ENCODE measurements at regions of chrX and their contacts with region 1.

Region 1: GRCh38 chrX:101595739-101596419 is 21.9 kb downstream of the ARMCX6 start:
- DNase-seq: peak in 5 of 9 experiments; percentile 13 to 76 (median 42)
- ATAC-seq: peak; percentile 72
- H3K4me3 ChIP-seq: no peak overlapping the region
- H3K4me3 Mint-ChIP-seq: no peak overlapping the region
- H3K27ac ChIP-seq: no peak overlapping the region
- H3K27ac Mint-ChIP-seq: no peak overlapping the region
- H3K4me1 ChIP-seq: no peaks in the 10 kb centered on the region
- H3K4me1 Mint-ChIP-seq: no peaks in the 10 kb centered on the region
- H3K27me3 ChIP-seq: no peaks in the 10 kb centered on the region
- H3K27me3 Mint-ChIP-seq: peaks cover 14% of the 10 kb centered on the region
- CTCF ChIP-seq: peak; percentile 65

Region 2: DNA sequence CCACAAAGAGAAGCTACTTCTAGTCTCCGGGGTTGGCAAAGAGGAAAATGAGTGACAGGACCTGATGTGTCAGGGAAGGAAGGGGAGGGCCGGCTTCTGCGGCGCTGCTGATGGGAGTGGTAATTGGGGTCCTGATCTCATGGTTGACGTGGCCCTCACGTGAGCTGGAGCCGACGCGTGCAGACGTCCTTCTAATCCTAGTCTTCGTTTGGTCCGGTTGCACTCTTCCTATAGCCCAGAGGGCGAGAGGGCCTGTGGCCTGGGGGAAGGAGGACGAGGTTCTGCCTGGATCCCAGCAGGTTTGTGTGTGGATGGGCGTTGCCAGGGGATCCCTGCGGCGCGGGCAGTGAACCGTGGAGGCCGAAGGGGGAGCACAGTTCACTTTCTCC is 45.5 kb before region 1 on chrX and contains the start of gene ARMCX1:
- CTCF ChIA-PET with region 1: no interaction called
- POLR2A ChIA-PET with region 1: no interaction called
- intact Hi-C with region 1: no loop called
- DNase-seq: peak in 5 of 9 experiments; percentile 13 to 49 (median 30)
- ATAC-seq: peak; percentile 69
- H3K4me3 ChIP-seq: peak within 1 kb of the TSS; percentile 34 to 61
- H3K4me3 Mint-ChIP-seq: peak within 1 kb of the TSS; percentile 84
- H3K27ac ChIP-seq: peak within 1 kb of the TSS in 1 of 2 experiments; percentile 40
- H3K27ac Mint-ChIP-seq: peak within 1 kb of the TSS; percentile 60
- H3K4me1 ChIP-seq: no peaks in the 10 kb centered on the region
- H3K4me1 Mint-ChIP-seq: peaks cover 8% of the 10 kb centered on the region
- H3K27me3 ChIP-seq: no peaks in the 10 kb centered on the region
- H3K27me3 Mint-ChIP-seq: peaks cover 3% of the 10 kb centered on the region
- CTCF ChIP-seq: no peak
- total RNA-seq, gene ARMCX1: 1.4 to 2.2 TPM

Region 3: GRCh38 chrX:101759000-101759399 is 163.1 kb after region 1 on chrX:
- CTCF ChIA-PET with region 1: interaction called, 15 read pairs
- POLR2A ChIA-PET with region 1: no interaction called
- intact Hi-C with region 1: loop called (anchors 5 kb)
- DNase-seq: peak in 5 of 9 experiments; percentile 10 to 59 (median 18)
- ATAC-seq: peak; percentile 57
- H3K4me3 ChIP-seq: no peak overlapping the region
- H3K4me3 Mint-ChIP-seq: no peak overlapping the region
- H3K27ac ChIP-seq: no peak overlapping the region
- H3K27ac Mint-ChIP-seq: no peak overlapping the region
- H3K4me1 ChIP-seq: no peaks in the 10 kb centered on the region
- H3K4me1 Mint-ChIP-seq: peaks cover 2% of the 10 kb centered on the region
- H3K27me3 ChIP-seq: no peaks in the 10 kb centered on the region
- H3K27me3 Mint-ChIP-seq: peaks cover 2% of the 10 kb centered on the region
- CTCF ChIP-seq: peak; percentile 46

Region 4: DNA sequence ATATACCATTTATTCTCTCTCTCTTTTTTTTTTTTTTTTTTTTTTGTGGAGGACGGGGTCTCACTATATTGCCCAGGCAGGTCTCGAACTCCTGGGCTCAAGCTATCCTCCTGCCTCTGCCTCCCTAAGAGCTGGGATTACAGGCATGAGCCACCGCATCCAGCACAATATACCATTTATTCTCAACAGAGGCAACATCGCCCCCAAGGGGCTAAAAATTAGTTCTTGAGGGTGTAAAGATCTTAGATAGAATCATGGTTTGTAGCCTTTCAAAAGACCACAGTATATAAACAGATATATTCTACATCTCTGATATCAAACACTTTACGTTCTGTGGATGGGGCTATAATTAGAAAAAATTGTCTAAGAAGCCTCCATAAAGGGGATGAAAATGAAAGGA is 489.8 kb after region 1 on chrX:
- CTCF ChIA-PET with region 1: no interaction called
- POLR2A ChIA-PET with region 1: no interaction called
- intact Hi-C with region 1: loop called in 1 of 2 experiments (anchors 5 kb)
- DNase-seq: peak in 2 of 9 experiments; percentile 1 to 7
- ATAC-seq: no peak
- H3K4me3 ChIP-seq: no peak overlapping the region
- H3K4me3 Mint-ChIP-seq: no peak overlapping the region
- H3K27ac ChIP-seq: no peak overlapping the region
- H3K27ac Mint-ChIP-seq: no peak overlapping the region
- H3K4me1 ChIP-seq: no peaks in the 10 kb centered on the region
- H3K4me1 Mint-ChIP-seq: no peaks in the 10 kb centered on the region
- H3K27me3 ChIP-seq: no peaks in the 10 kb centered on the region
- H3K27me3 Mint-ChIP-seq: peaks cover 12% of the 10 kb centered on the region
- CTCF ChIP-seq: no peak